ENCODE measurements at regions of chrX and their contacts with region 1.

Region 1: DNA sequence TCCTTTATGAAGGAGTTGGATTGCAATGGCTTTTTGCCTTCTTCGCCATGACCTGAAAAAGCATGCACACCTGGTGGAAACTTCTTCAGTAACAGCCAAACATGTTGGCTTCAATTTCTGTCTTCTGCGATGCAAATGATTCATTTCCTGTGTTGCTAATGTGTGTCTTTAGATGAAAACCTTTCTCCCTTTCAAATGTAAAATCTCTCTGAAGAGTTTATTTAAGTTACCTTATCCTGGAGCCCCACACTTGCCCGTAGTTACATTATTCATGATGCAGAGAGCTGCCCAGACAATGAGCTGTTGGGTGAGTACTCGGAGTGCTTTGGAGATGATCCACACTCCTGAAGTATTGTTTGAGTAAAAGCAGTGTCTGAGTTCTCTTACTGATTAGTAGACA is 1100.9 kb downstream of the RPA4 start:
- DNase-seq: peak; percentile 72
- H3K4me3 ChIP-seq: peak overlapping the region; percentile 71
- H3K27ac ChIP-seq: peak overlapping the region; percentile 97
- H3K4me1 ChIP-seq: peaks cover 54% of the 10 kb centered on the region
- CTCF ChIP-seq: no peak

Region 2: GRCh38 chrX:97629597-97629985 is 355.1 kb before region 1 on chrX:
- CTCF ChIA-PET with region 1: no interaction called
- POLR2A ChIA-PET with region 1: no interaction called
- intact Hi-C with region 1: no loop called
- DNase-seq: no peak
- H3K4me3 ChIP-seq: no peak overlapping the region
- H3K27ac ChIP-seq: no peak overlapping the region
- H3K4me1 ChIP-seq: no peaks in the 10 kb centered on the region
- CTCF ChIP-seq: no peak

Region 3: GRCh38 chrX:97909245-97909644 is 75.4 kb before region 1 on chrX:
- CTCF ChIA-PET with region 1: no interaction called
- POLR2A ChIA-PET with region 1: interaction called, 3 read pairs
- intact Hi-C with region 1: loop called (anchors 2 kb)
- DNase-seq: peak; percentile 79
- H3K4me3 ChIP-seq: peak overlapping the region; percentile 35
- H3K27ac ChIP-seq: peak overlapping the region; percentile 71
- H3K4me1 ChIP-seq: peaks cover 15% of the 10 kb centered on the region
- CTCF ChIP-seq: no peak

Measured in OCI-LY7 (cell line).